ENCODE measurements at regions of chr12 and their contacts with region 1.

Region 1: DNA sequence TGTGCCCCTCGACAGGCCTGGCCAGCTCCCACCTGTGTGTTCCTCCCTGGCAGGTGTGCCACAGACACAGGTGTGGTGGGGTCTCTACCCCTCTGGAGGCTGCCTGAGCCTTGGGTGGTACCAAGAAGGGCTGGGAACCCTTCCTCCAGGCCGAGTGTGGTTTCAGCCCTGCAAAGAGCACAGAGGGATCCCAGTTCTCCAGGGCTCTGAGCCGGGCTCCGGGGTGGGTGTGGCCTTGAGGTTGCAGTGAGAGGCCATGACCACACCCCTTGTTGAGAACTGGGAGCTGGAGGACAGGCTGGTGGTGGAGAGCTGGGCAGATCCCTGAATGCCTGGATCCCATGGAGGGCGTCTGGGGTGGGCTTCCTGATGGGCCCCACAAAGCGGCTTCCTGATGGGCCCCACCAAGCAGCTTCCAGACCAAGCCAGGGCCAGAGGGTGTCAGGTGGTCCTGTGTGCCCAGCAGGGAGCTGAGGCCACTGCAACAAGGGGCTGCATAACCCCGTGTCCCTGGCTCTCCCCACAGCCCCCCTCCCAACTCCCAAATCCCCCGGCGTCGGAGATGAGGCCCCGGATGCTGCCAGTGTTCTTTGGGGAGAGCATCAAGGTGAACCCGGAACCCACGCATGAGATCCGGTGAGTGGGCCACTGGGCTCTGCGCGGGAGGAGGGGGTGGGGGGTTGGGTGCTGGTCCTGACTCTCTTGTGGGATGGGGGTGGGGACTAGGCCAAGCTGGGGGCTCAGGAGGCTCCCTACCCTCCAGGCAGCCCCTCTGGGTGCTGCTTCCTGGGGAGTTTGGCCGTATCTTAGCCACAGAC is 16.6 kb downstream of the RFLNA start:
- DNase-seq: no peak
- ATAC-seq: peak; percentile 49 to 51
- H3K4me3 ChIP-seq: no peak overlapping the region
- H3K27ac ChIP-seq: no peak overlapping the region
- H3K4me1 ChIP-seq: no peaks in the 10 kb centered on the region
- H3K27me3 ChIP-seq: no peaks in the 10 kb centered on the region
- CTCF ChIP-seq: no peak

Region 2: DNA sequence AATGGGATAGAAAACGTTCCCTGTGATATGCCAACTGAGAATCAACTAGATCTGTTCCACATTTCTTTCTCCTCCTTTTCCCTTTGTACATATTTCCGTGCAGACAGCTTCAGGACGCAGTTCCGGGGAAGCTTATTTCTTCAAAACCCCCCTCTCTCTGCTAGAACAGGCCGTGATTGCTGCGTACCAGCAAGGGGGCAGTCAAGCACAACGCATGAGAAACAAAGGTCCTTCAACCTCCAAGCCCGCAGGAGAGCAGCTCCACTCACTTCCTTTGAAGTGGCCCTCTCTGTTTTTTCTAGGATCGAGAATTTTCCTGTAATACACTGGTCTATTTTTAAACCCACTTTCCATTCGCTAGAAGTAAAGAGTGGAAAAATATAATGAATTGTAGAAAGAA is 257.6 kb before region 1 on chr12:
- intact Hi-C with region 1: loop called (anchors 10 kb)
- DNase-seq: peak; percentile 61
- ATAC-seq: peak; percentile 93 to 95
- H3K4me3 ChIP-seq: no peak overlapping the region
- H3K27ac ChIP-seq: no peak overlapping the region
- H3K4me1 ChIP-seq: peaks cover 10% of the 10 kb centered on the region
- H3K27me3 ChIP-seq: no peaks in the 10 kb centered on the region
- CTCF ChIP-seq: peak; percentile 67